ENCODE measurements at regions of chr22 and their contacts with region 1.

Region 1: GRCh38 chr22:32528984-32529982 is 54.7 kb downstream of the FBXO7 start:
- DNase-seq: peak; percentile 28
- ATAC-seq: peak; percentile 95
- H3K4me3 ChIP-seq: no peak overlapping the region
- H3K27ac ChIP-seq: no peak overlapping the region
- H3K4me1 ChIP-seq: no peaks in the 10 kb centered on the region
- H3K27me3 ChIP-seq: no peaks in the 10 kb centered on the region
- CTCF ChIP-seq: peak; percentile 83

Region 2: DNA sequence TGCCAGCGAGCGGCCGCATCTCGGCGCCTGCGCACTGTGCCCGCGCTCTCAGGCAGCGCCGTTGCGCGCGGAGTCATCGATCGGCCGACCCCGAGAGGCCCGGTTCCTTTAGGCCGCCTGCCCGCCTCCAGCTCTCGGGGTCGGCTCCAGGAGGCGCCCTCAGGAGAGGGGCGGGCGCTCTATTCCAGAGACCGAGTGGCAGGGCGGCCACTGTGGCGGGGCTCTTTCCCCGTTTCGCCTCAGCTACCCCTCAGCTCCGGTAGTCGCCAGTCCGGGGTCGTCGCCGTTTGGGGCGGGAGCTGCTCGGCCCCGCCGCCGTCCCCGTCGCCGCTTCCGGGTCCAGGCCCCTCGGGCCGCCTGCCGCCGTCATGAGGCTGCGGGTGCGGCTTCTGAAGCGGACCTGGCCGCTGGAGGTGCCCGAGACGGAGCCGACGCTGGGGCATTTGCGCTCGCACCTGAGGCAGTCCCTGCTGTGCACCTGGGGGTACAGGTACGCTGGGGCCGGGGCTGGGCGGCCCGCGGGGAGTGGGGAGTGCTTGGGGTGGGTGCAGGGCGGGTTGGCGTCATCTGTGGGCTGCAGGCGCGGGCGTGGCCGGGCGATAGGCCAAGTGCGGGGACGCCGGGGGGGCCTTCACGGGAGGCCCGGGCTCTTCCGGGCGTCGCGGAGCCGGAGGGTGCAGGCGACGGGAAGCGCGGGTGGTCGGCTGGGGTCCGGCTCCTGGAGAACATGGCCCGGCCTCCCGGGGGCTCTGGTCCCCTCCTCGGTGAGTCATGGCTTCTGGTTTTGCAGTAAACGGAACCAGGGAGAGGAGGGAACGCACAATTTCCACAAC is 54.4 kb before region 1 on chr22 and contains the start of gene FBXO7:
- CTCF ChIA-PET with region 1: interaction called, 10 read pairs
- POLR2A ChIA-PET with region 1: no interaction called
- in situ Hi-C with region 1: no loop called
- intact Hi-C with region 1: no loop called
- DNase-seq: no peak
- ATAC-seq: peak; percentile 91
- H3K4me3 ChIP-seq: peak within 1 kb of the TSS; percentile 78 to 86
- H3K27ac ChIP-seq: peak within 1 kb of the TSS; percentile 86
- H3K4me1 ChIP-seq: peaks cover 10% of the 10 kb centered on the region
- H3K27me3 ChIP-seq: no peaks in the 10 kb centered on the region
- CTCF ChIP-seq: peak; percentile 35
- total RNA-seq, gene FBXO7: 67.8 TPM

Region 3: DNA sequence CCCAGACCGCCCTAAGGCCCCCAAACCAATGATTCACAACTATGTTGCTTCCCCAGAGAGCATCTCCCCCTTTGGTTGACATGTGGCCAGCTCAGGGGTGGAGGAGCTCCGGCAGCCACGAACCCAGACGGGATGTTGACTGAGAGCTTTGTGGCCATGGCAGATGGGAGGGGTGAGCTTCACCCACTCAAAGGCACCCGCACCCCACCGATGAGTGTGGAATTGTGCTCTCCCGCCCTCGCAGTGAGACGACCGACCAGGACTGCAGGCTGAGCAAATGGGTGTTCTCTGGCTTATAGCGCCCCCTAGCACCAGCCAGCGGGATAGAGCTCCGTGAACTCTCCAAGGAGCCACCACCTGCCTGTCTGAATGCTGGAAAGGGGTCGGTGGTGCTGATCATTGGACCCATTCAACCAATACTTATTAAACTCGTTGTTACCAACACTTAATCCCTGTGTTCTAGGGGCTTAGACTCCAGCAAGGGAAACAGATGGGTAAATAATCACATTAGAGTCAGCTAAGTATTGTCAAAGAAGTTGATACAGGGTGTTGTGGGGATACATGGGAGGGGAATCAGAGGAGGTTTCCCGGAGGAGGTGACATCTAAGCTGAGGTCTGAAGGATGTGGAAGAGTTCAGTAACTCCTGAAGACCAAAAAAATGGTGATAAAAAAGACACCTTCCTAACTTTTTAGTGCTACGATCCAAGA is 267.7 kb after region 1 on chr22:
- CTCF ChIA-PET with region 1: no interaction called
- POLR2A ChIA-PET with region 1: no interaction called
- in situ Hi-C with region 1: no loop called
- intact Hi-C with region 1: loop called (anchors 10 kb)
- DNase-seq: peak; percentile 7
- ATAC-seq: peak; percentile 66; the same call in 1 of the 2 replicates
- H3K4me3 ChIP-seq: no peak overlapping the region
- H3K27ac ChIP-seq: no peak overlapping the region
- H3K4me1 ChIP-seq: no peaks in the 10 kb centered on the region
- H3K27me3 ChIP-seq: no peaks in the 10 kb centered on the region; the same call in 1 of the 2 replicates
- CTCF ChIP-seq: peak; percentile 79

Region 4: DNA sequence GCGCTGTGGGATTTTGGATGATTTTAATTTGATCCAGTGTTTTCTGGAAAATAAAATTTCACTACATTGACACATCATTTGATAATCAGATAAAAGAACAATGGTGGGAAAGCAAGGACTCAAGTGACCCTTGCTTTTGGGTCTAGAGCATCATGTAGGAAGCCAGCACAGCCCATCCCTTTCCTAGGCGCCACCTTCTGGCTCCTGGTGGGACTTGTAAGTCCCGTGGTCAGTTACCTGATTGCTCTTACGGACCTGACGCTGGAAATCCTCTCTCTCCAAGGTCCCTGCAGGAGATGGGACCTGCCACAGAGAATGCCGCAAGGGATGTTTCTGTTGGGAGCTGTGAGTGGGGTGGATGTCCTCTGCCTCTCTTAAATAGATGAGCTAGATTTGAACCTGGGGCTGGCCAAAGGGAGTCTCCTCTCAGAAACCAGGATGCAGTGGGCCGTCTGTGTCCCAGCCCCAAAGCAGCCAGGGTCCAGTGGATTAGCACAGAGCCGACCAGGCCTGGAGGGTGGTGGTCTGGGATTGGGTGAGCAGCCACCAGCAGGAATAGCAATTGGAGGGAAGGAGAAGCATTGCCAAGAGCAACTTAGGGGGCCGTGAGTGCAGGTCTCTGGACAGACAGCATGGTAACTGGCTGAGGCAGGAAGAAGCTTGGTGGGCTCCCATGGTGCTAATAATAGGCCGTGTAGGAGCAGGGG is 293.9 kb after region 1 on chr22:
- CTCF ChIA-PET with region 1: no interaction called
- POLR2A ChIA-PET with region 1: no interaction called
- in situ Hi-C with region 1: no loop called
- intact Hi-C with region 1: loop called (anchors 5 kb)
- DNase-seq: no peak
- ATAC-seq: 0 out of 2 replicates have a peak, but pooled peaks have one; percentile 70
- H3K4me3 ChIP-seq: no peak overlapping the region
- H3K27ac ChIP-seq: no peak overlapping the region
- H3K4me1 ChIP-seq: no peaks in the 10 kb centered on the region
- H3K27me3 ChIP-seq: no peaks in the 10 kb centered on the region
- CTCF ChIP-seq: peak; percentile 71

Region 5: DNA sequence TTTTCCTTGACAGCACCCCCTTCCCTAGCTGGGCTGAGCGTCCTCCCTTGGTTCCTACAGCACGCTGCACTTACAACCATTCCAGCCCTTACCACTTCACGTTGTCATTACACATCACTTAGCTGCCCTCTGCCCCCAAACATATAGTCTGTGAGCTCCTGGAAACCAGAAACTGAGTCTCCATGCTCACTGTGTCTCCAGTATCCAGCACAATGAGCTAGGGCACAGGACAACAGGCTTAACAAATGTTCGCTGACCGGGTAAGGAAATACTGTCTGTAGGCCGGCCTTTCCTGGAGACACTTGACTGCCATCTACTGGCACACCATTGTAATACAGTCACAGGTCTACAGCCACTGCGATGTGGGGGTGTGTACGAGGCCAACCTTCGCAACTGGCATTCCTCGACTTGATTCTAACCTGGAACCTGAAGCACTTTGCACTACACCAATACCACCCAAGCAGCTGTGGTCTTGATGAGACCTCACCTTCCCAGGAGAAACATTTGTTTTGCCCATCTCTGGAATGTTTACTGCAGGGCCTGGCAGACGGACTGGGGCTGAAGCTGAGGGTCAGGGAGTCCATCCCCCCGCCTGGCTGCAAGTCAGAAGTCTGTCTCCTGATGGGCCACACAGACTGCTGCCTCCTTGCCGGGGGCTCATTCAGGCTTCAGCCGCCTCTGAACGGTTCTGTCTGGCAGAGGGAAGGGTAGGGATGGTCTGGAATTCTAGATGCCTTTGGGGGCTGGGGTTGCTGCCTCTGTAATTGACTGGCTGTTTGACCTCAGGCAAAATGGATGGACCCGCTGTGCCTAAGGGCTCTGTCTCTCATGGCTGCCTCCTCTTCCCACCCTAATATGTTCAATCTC is 456.8 kb after region 1 on chr22:
- CTCF ChIA-PET with region 1: no interaction called
- POLR2A ChIA-PET with region 1: no interaction called
- in situ Hi-C with region 1: no loop called
- intact Hi-C with region 1: loop called (anchors 5 kb)
- DNase-seq: peak; percentile 33
- ATAC-seq: peak; percentile 91
- H3K4me3 ChIP-seq: no peak overlapping the region
- H3K27ac ChIP-seq: no peak overlapping the region
- H3K4me1 ChIP-seq: no peaks in the 10 kb centered on the region
- H3K27me3 ChIP-seq: no peaks in the 10 kb centered on the region
- CTCF ChIP-seq: peak; percentile 83

Measured in Panc1 (cell line).